ENCODE measurements at regions of chr9 and their contacts with region 1.

Region 1: DNA sequence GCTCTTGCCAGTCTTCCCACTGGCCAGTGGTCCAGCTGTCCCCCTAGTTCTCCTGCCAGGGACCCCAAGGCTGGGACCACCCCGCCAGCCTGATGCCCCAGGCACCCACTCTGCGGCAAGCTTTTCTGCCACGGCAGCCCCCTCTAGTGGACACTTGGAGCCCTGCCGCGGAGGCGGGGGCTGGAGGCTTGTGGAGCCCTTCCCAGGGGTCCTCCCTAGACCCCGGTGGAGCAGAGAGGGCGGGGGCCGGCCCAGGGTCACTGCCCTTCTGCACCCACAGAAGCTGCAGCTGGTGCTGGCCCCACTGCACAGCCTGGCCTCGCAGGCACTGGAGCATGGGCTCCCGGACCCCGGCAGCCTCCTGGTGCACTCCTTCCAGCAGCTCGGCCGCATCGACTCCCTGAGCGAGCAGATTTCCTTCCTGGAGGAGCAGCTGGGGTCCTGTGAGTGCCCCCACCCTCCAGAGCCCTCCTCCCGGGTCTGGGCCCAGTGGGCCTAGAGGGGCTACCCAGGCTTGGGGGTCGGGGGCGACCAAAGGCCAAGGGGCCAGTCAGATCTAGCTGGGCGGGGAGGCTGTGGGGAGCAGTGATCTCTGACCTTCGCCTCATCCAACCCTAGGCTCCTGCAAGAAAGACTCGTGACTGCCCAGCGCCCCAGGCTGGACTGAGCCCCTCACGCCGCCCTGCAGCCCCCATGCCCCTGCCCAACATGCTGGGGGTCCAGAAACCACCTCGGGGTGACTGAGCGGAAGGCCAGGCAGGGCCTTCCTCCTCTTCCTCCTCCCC is 9.1 kb downstream of the EGFL7 start:
- DNase-seq: peak; percentile 60
- ATAC-seq: peak; percentile 67
- H3K4me3 Mint-ChIP-seq: no peak overlapping the region
- H3K27ac Mint-ChIP-seq: no peak overlapping the region
- H3K4me1 Mint-ChIP-seq: no peaks in the 10 kb centered on the region
- H3K27me3 Mint-ChIP-seq: no peaks in the 10 kb centered on the region
- CTCF ChIP-seq: peak; percentile 87

Region 2: GRCh38 chr9:136656795-136657611 is 14.8 kb before region 1 on chr9:
- CTCF ChIA-PET with region 1: interaction called, 12 read pairs
- POLR2A ChIA-PET with region 1: no interaction called
- intact Hi-C with region 1: no loop called
- DNase-seq: no peak
- ATAC-seq: no peak
- H3K4me3 Mint-ChIP-seq: no peak overlapping the region
- H3K27ac Mint-ChIP-seq: no peak overlapping the region
- H3K4me1 Mint-ChIP-seq: peaks cover 13% of the 10 kb centered on the region
- H3K27me3 Mint-ChIP-seq: peaks cover 28% of the 10 kb centered on the region
- CTCF ChIP-seq: no peak